ENCODE measurements at regions of chr19 and their contacts with region 1.

Region 1: GRCh38 chr19:19176950-19177349 is 6.9 kb upstream of the MEF2B start:
- DNase-seq: no peak
- H3K4me3 ChIP-seq: no peak overlapping the region
- H3K27ac ChIP-seq: no peak overlapping the region
- H3K4me1 ChIP-seq: peaks cover 0 to 8% (median 2%) of the 10 kb centered on the region in 4 experiments; a peak in 4 of 7 replicates
- H3K27me3 ChIP-seq: no peaks in the 10 kb centered on the region
- CTCF ChIP-seq: no peak
- EP300 ChIP-seq: no peak
- POLR2A ChIP-seq: no peak
- RAD21 ChIP-seq: no peak

Region 2: DNA sequence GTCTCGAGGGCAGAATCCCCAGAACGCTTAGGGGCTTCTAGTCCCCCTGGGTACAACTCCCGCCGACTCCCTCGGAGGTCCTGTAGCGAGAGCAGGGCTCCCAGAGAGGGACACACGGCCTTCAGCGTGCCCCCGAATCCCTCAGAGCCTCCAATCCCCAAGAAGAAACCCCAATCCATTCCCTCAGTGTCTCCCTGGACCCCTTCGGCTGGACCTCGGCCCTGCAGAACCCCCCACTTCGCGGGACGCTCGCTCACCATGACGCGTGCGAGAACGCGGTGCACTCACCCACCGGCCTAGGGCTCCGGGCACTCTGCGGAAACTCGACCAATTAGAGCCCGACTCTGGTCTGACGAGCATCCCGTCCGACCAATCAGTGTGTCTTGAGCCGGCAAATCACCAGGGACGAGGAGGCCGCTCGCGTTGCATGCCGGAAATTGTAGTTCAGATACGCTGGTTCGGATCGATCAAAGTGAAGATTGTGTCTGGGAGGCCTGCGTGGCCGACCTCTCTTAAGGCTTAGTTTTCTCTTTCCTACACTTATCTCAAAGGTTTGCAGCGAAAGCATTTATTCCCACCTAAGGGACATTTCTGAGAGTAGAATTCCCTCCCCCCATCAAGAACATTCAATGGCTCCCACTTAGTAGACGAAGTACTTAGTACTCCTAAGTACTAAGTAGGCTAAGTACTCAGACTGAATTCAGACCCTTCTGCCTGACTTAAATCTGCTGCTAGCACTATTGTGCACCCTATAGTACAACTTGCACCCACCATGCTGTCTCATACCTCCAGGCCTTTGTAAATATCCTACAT is 38.6 kb before region 1 on chr19 and contains the start of gene TMEM161A:
- CTCF ChIA-PET with region 1: interaction called, 40 read pairs
- POLR2A ChIA-PET with region 1: interaction called, 12 read pairs
- DNase-seq: peak; percentile 88 to 98
- H3K4me3 ChIP-seq: peak within 1 kb of the TSS; percentile 67 to 96 (median 72)
- H3K27ac ChIP-seq: no peak within 1 kb of the TSS
- H3K4me1 ChIP-seq: peaks cover 0 to 14% (median 10%) of the 10 kb centered on the region in 4 experiments; a peak in 6 of 7 replicates
- H3K27me3 ChIP-seq: peaks cover 0 to 3% (median 0%) of the 10 kb centered on the region in 4 experiments; a peak in 4 of 7 replicates
- CTCF ChIP-seq: no peak
- EP300 ChIP-seq: no peak
- POLR2A ChIP-seq: peak in 1 of 2 experiments; percentile 54; a peak in 1 of 3 replicates
- RAD21 ChIP-seq: no peak
- total RNA-seq, gene TMEM161A: 41.9 and 47.8 TPM in 2 replicates

Region 3: DNA sequence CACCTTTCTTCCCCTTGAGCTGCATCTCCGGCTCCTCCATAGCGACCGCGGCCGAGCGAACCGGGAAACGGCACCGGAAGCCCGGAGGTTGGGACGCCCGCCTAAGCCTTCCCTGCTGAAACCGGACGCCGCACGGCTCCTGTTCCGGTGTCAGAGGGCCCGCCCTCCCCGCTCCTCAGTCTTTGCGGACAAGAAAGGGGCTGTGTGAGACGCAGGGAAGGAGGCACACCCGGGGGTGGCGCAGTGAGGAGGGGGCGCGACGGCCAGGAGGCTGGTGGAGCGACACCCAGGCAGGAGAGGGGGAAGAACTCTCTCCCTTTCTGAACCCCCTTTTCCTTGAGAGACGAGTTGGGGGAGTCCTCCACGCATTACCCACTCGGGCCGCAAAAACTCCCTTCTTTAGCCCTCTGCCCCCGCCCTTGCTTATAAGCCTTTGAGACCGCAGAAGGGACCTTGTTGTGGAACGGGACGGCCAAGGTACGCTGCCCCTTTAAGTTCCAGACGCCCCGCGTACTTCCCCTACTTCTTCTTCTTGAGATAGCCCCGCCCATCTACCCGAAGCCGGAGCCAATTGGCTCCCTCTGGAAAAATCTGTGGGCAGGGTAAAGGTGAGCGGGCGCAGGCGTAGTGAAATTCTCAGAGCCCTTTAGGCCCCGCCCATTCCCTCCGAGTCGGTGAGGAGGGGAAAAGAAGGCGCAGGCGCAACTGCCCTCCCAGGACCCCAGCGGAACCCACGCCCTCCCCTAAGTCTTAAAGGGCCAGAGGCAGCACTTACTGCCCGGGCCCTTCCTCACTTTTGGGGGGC is 15.3 kb after region 1 on chr19 and contains the starts of genes BORCS8 and RFXANK:
- CTCF ChIA-PET with region 1: interaction called, 24 read pairs
- POLR2A ChIA-PET with region 1: interaction called, 16 read pairs
- DNase-seq: peak; percentile 97 to 98
- H3K4me3 ChIP-seq: peak within 1 kb of the TSS; percentile 85 to 96 (median 92)
- H3K27ac ChIP-seq: peak within 1 kb of the TSS; percentile 91
- H3K4me1 ChIP-seq: no peaks in the 10 kb centered on the region
- H3K27me3 ChIP-seq: no peaks in the 10 kb centered on the region
- CTCF ChIP-seq: peak in 1 of 3 experiments; percentile 4; a peak in 1 of 4 replicates
- EP300 ChIP-seq: peak in 1 of 2 experiments; percentile 33; a peak in 1 of 3 replicates
- POLR2A ChIP-seq: peak in 1 of 2 experiments; percentile 80; a peak in 2 of 3 replicates
- RAD21 ChIP-seq: no peak; a peak in 1 of 4 replicates
- total RNA-seq, gene BORCS8: 15.9 and 20.9 TPM in 2 replicates
- total RNA-seq, gene RFXANK: 72.9 and 77.7 TPM in 2 replicates

Measured in H1 (cell line).